Stomach (tissue), 19 donors: ENCODE measurements at regions of chr3 and their contacts with region 1.

Region 1: DNA sequence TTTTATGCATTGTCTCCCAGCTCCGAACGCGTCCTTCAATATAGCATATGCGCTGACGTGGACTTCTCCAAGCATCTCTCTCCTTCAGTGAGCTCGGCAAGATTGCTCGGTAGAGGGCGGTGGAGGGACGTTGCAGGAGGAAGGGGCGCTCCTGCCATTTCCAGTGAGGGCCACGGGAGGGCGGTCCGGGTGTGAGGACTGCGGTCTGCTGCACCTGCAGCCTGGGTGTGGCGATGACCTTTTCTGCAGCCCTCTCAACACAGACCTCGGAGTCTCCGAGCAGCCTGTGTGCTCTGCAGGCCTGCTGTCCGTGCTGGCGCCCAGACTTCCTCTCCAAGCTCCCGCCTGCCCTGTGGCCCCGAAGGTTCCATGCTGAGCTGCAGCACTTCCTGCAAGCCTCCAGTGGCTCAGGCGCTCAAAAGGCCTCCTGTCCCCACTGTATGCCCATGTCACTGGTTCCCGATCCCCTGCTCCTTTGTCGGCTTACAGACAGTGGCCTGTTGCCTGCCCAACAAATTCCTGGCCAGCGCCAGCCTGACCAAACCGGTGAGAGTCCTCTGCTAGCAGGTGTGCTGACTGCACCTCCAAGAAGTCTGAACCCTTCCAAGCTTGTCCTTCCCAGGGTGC is 8.9 kb upstream of the RTP3 start:
- DNase-seq: peak; percentile 97
- H3K4me3 ChIP-seq: peak overlapping the region in 2 of 4 donors; percentile 21 to 27
- H3K27ac ChIP-seq: peak overlapping the region; percentile 9 to 57 (median 42)
- H3K4me1 ChIP-seq: peaks cover 11 to 26% (median 21%) of the 10 kb centered on the region in 4 donors
- H3K27me3 ChIP-seq: peaks cover 0 to 3% (median 0%) of the 10 kb centered on the region in 3 donors
- CTCF ChIP-seq: peak in 6 of 7 experiments; percentile 21 to 100 (median 96)
- EP300 ChIP-seq: no peak
- POLR2A ChIP-seq: no peak

Region 2: GRCh38 chr3:46194868-46195553 is 293.8 kb before region 1 on chr3:
- intact Hi-C with region 1: no loop called
- DNase-seq: no peak
- H3K4me3 ChIP-seq: no peak overlapping the region
- H3K27ac ChIP-seq: no peak overlapping the region
- H3K4me1 ChIP-seq: no peaks in the 10 kb centered on the region
- H3K27me3 ChIP-seq: no peaks in the 10 kb centered on the region
- CTCF ChIP-seq: no peak
- EP300 ChIP-seq: no peak
- POLR2A ChIP-seq: no peak

Region 3: DNA sequence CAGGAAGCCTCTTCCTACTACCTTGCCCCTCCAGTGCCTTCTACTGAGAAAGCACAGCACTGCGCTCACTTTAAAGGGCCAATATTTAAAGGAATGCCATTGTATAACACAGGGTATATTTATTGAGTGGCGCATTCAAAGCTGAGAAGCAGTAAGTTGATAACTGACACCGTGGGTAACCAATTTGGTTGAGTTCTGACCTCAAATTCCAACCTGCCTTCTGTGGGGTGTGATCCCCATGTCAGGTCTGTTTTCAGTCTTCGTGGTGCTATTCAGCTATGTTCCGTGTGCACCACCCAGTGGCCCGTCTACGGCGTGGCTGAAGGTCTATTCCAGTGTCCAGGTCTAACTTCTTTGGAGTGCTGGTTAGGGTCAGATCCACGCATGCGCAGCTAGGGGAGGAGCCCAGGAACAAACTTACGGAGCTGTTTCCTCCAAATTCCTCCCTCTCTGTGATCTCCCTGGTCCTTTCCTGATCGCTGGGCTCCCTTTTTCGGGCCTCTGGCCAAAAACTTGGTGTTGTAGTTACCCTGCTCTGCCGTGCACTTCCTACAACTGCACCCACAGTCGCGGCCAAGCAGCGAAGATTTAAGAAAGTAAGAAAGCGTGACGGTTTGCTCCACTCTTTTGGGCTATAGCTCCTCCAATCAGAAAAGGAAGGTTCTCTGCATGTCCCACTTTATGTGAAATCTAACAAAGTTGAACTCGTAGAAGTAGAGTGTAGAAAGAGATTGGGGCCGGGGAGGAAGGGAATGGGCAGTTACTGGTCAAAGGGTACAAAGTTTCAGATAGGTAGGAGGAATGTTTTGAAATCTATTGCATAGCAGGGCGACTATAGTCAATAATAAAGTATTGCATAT is 69.6 kb after region 1 on chr3:
- intact Hi-C with region 1: loop called (anchors 5 kb)
- DNase-seq: peak; percentile 94 to 95
- H3K4me3 ChIP-seq: peak overlapping the region; percentile 38 to 47 (median 42)
- H3K27ac ChIP-seq: peak overlapping the region; percentile 52 to 80 (median 76)
- H3K4me1 ChIP-seq: peaks cover 0 to 19% (median 10%) of the 10 kb centered on the region in 4 donors
- H3K27me3 ChIP-seq: no peaks in the 10 kb centered on the region
- CTCF ChIP-seq: peak in 5 of 7 experiments; percentile 36 to 93 (median 64)
- EP300 ChIP-seq: no peak
- POLR2A ChIP-seq: no peak

Region 4: GRCh38 chr3:46629551-46630517 is 141.0 kb after region 1 on chr3:
- intact Hi-C with region 1: loop called (anchors 5 kb)
- DNase-seq: peak; percentile 84 to 95
- H3K4me3 ChIP-seq: peak overlapping the region; percentile 18 to 43 (median 35)
- H3K27ac ChIP-seq: peak overlapping the region; percentile 17 to 83 (median 78)
- H3K4me1 ChIP-seq: peaks cover 10 to 17% (median 15%) of the 10 kb centered on the region in 4 donors
- H3K27me3 ChIP-seq: no peaks in the 10 kb centered on the region
- CTCF ChIP-seq: peak in 5 of 7 experiments; percentile 94 to 99 (median 96)
- EP300 ChIP-seq: no peak
- POLR2A ChIP-seq: no peak

Region 5: DNA sequence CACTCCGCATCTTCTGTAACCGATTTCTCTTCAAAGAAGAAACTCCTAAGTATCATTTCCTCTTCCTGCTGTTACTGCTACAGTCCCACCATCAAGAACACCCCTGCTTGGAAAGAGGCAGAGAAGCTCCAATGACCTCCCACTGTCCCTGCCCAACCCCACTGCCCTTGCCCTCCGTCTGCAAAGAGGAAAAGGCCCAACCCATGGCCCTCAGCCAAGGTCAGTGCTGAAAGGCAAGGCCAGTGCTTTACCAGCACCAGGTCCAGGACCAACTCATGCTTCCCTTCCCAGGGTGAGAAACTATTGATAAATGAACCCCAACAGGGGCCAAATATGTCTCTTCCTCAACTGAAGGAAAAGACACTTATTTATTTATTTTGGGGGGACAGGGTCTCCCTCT is 146.0 kb after region 1 on chr3:
- intact Hi-C with region 1: loop called (anchors 5 kb)
- DNase-seq: no peak
- H3K4me3 ChIP-seq: no peak overlapping the region
- H3K27ac ChIP-seq: no peak overlapping the region
- H3K4me1 ChIP-seq: peaks cover 5 to 8% (median 6%) of the 10 kb centered on the region in 4 donors
- H3K27me3 ChIP-seq: no peaks in the 10 kb centered on the region
- CTCF ChIP-seq: no peak
- EP300 ChIP-seq: no peak
- POLR2A ChIP-seq: no peak

Region 6: GRCh38 chr3:46674031-46674845 is 185.4 kb after region 1 on chr3:
- intact Hi-C with region 1: no loop called
- DNase-seq: no peak
- H3K4me3 ChIP-seq: no peak overlapping the region
- H3K27ac ChIP-seq: no peak overlapping the region
- H3K4me1 ChIP-seq: peaks cover 0 to 14% (median 9%) of the 10 kb centered on the region in 4 donors
- H3K27me3 ChIP-seq: no peaks in the 10 kb centered on the region
- CTCF ChIP-seq: no peak
- EP300 ChIP-seq: no peak
- POLR2A ChIP-seq: no peak